SK-N-SH (cell line): ENCODE measurements at regions of chr16 and their contacts with region 1.

Region 1: GRCh38 chr16:56317998-56318826 is 107.1 kb downstream of the AMFR start:
- DNase-seq: peak; percentile 97
- H3K4me3 ChIP-seq: no peak overlapping the region; a peak in 1 of 4 replicates
- H3K27ac ChIP-seq: peak overlapping the region in 1 of 2 experiments; percentile 16; a peak in 1 of 4 replicates
- H3K4me1 ChIP-seq: peaks cover 0 to 25% of the 10 kb centered on the region in 2 experiments; a peak in 1 of 4 replicates
- H3K27me3 ChIP-seq: no peaks in the 10 kb centered on the region; the same call in 1 of the 2 replicates
- CTCF ChIP-seq: peak; percentile 84
- EP300 ChIP-seq: no peak
- RAD21 ChIP-seq: peak; percentile 96

Region 2: DNA sequence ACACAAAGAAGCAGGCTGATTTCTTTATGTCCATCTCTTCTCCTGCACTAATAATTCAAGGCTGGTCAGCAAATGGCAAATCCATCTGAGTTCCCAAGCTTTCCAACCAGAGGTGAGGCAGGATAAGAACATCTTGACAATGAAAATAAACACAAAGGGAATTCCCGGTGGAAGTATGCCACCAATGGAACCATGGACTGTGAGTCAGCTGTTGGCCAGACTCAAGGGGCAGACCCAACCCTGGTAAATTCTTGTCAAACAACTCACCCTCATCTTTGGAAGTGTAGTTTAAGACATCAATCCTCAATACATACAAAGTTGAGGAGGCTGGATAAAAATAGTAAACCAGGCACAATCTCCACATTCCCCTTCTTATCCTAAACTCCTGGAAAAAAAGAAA is 368.7 kb before region 1 on chr16:
- CTCF ChIA-PET with region 1: interaction called, 104 read pairs
- POLR2A ChIA-PET with region 1: no interaction called
- DNase-seq: no peak
- H3K4me3 ChIP-seq: no peak overlapping the region
- H3K27ac ChIP-seq: no peak overlapping the region
- H3K4me1 ChIP-seq: no peaks in the 10 kb centered on the region; a peak in 1 of 4 replicates
- H3K27me3 ChIP-seq: no peaks in the 10 kb centered on the region
- CTCF ChIP-seq: no peak
- EP300 ChIP-seq: no peak
- RAD21 ChIP-seq: no peak

Region 3: GRCh38 chr16:56191156-56191815 is 126.9 kb before region 1 on chr16 and contains the start of gene GNAO1:
- CTCF ChIA-PET with region 1: interaction called, 26 read pairs
- POLR2A ChIA-PET with region 1: interaction called, 6 read pairs
- DNase-seq: peak; percentile 94
- H3K4me3 ChIP-seq: peak within 1 kb of the TSS; percentile 53 to 55
- H3K27ac ChIP-seq: peak within 1 kb of the TSS in 1 of 2 experiments; percentile 93; a peak in 2 of 4 replicates
- H3K4me1 ChIP-seq: peaks cover 0 to 8% of the 10 kb centered on the region in 2 experiments; a peak in 2 of 4 replicates
- H3K27me3 ChIP-seq: peaks cover 46% of the 10 kb centered on the region
- CTCF ChIP-seq: no peak
- EP300 ChIP-seq: no peak
- RAD21 ChIP-seq: peak; percentile 19; the same call in 1 of the 2 replicates
- polyA plus RNA-seq, gene GNAO1: 0.15 and 0.30 TPM in 2 replicates

Region 4: GRCh38 chr16:56262148-56262547 is 56.1 kb before region 1 on chr16:
- CTCF ChIA-PET with region 1: interaction called, 16 read pairs
- POLR2A ChIA-PET with region 1: no interaction called
- DNase-seq: no peak
- H3K4me3 ChIP-seq: no peak overlapping the region
- H3K27ac ChIP-seq: peak overlapping the region in 1 of 2 experiments; percentile 93; a peak in 2 of 4 replicates
- H3K4me1 ChIP-seq: peaks cover 0 to 89% of the 10 kb centered on the region in 2 experiments; a peak in 2 of 4 replicates
- H3K27me3 ChIP-seq: 0 out of 2 replicates have a peak, but pooled peaks cover 11% of the 10 kb centered on the region
- CTCF ChIP-seq: no peak
- EP300 ChIP-seq: no peak
- RAD21 ChIP-seq: no peak

Region 5: GRCh38 chr16:56295739-56296527 is 22.3 kb before region 1 on chr16:
- CTCF ChIA-PET with region 1: interaction called, 26 read pairs
- POLR2A ChIA-PET with region 1: no interaction called
- DNase-seq: peak; percentile 58
- H3K4me3 ChIP-seq: no peak overlapping the region
- H3K27ac ChIP-seq: peak overlapping the region in 1 of 2 experiments; percentile 68; a peak in 2 of 4 replicates
- H3K4me1 ChIP-seq: peaks cover 0 to 48% of the 10 kb centered on the region in 2 experiments; a peak in 2 of 4 replicates
- H3K27me3 ChIP-seq: no peaks in the 10 kb centered on the region; the same call in 1 of the 2 replicates
- CTCF ChIP-seq: no peak
- EP300 ChIP-seq: peak in 1 of 2 experiments; percentile 62; a peak in 1 of 4 replicates
- RAD21 ChIP-seq: no peak

Region 6: DNA sequence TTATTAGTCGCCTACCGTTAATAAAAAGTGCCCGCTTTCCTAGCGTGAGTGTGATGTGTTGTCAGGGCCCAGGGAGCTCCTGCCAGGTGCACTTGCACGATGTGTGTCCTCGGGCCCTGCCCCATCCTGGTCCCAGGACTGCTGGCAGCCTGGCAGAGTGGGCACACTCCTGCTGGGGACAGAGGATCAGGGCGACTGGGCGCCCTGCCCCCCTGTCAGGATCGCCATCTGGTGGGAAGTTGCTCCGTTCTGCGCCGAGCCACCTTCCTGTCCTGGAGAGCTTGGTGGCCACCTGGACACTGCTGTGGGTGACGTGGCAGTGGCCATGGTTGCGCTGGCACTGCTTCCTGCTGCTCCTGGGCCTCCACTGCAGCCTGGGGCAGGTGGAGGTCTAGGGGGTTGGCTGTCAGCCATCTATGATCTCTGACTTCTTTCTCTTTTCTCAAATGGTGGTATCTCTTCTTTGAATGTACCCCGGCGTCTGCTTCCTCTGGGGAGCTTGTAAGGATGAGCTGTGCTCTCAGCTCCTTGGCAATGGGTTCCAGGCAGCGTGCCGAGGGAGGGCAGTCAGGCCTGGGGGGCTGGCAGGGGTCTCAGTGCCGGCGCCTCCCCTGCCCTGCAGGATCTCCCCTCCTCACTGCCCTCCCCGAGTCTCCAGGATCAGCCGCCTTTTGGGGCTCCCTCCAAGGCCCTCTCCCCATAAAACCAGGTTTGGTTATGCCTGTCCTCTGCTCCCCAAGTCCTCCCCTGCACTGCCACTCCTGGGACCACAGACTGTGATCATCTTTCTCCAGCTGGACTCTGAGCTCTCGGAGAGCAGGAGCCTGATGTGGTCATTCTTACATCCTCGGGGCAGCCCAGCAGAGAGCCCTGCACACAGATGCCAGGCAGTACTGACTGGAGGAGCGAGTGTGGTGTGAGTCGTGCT is 30.2 kb after region 1 on chr16:
- CTCF ChIA-PET with region 1: interaction called, 12 read pairs
- POLR2A ChIA-PET with region 1: no interaction called
- DNase-seq: no peak
- H3K4me3 ChIP-seq: no peak overlapping the region
- H3K27ac ChIP-seq: no peak overlapping the region
- H3K4me1 ChIP-seq: peaks cover 0 to 16% of the 10 kb centered on the region in 2 experiments; a peak in 1 of 4 replicates
- H3K27me3 ChIP-seq: no peaks in the 10 kb centered on the region
- CTCF ChIP-seq: no peak
- EP300 ChIP-seq: no peak
- RAD21 ChIP-seq: no peak

Region 7: DNA sequence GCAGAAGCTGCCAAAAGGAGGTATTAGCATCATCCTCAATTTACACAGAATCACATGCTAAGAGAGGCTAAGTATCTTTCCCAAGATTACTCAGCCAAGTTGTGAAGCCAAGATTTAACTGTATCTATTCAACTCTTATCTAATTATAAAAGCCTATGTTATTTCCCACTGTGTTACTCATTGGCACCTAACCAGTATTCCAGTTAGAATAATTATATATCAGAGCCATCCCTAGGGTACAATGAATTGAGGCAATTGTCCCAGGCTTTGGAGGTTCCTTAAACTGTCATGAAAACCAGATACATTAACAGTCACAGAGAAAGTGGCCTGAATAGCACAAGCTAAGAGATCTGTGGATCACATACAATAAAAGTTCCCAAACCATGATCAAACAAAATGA is 118.0 kb after region 1 on chr16:
- CTCF ChIA-PET with region 1: no interaction called
- POLR2A ChIA-PET with region 1: no interaction called
- DNase-seq: no peak
- H3K4me3 ChIP-seq: no peak overlapping the region
- H3K27ac ChIP-seq: no peak overlapping the region
- H3K4me1 ChIP-seq: no peaks in the 10 kb centered on the region
- H3K27me3 ChIP-seq: no peaks in the 10 kb centered on the region
- CTCF ChIP-seq: no peak
- EP300 ChIP-seq: no peak
- RAD21 ChIP-seq: no peak